Activated CD4-positive, alpha-beta T cell treated with anti-CD3 and anti-CD28 coated beads for 36 hours (primary cell): ENCODE measurements at regions of chr7 and their contacts with region 1.

Region 1: GRCh38 chr7:22238354-22239311 is 118.3 kb downstream of the RAPGEF5 start:
- DNase-seq: no peak
- ATAC-seq: no peak
- H3K4me3 Mint-ChIP-seq: no peak overlapping the region
- H3K27ac Mint-ChIP-seq: no peak overlapping the region
- H3K4me1 Mint-ChIP-seq: no peaks in the 10 kb centered on the region
- H3K27me3 Mint-ChIP-seq: no peaks in the 10 kb centered on the region

Region 2: DNA sequence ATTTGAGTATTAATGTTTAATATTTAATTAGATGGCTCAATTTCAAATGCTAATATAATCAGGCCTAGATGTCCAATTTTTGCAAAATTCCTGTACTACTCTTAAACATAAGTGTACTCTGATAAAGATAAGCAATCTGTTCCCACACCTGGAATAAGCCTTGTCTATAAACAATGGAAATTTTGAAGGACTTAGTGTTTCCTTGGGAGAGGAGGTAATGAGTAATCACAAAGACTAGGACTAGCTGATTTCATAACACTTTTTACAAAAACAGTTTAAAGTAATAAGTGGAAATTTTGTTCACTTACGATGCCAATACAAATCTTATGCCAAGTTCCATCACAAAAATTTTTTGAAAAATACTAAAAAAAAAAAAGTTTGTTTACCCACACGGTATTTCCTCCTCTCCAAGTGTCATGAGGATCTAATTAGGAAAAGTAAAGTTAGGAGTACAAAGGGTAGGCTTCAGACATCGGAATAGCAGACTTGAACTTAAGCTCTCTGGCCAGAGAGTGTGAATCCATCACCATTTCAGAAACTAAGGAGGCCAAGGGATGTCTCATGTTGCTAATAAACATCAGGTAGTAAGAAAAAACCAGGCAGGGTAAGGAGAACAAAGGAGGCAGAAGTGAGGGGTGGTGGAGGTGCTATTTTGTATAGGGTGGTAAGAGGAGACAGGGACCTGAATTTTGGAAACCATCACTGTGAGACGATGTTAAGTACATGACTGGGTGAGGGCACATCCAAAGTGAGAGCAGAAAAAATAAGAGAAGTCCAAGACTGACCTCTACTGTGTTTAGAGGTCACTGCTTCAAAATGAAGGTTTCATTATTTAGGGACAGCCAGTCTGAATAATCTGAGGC is 57.0 kb after region 1 on chr7:
- CTCF ChIA-PET with region 1: no interaction called
- POLR2A ChIA-PET with region 1: no interaction called
- intact Hi-C with region 1: loop called in 1 of 2 experiments (anchors 10 kb)
- DNase-seq: no peak
- ATAC-seq: no peak
- H3K4me3 Mint-ChIP-seq: no peak overlapping the region
- H3K27ac Mint-ChIP-seq: no peak overlapping the region
- H3K4me1 Mint-ChIP-seq: peaks cover 9% of the 10 kb centered on the region
- H3K27me3 Mint-ChIP-seq: peaks cover 4% of the 10 kb centered on the region

Region 3: GRCh38 chr7:23135755-23136154 is 897.1 kb after region 1 on chr7:
- CTCF ChIA-PET with region 1: no interaction called
- POLR2A ChIA-PET with region 1: no interaction called
- intact Hi-C with region 1: no loop called
- DNase-seq: no peak
- ATAC-seq: no peak
- H3K4me3 Mint-ChIP-seq: no peak overlapping the region
- H3K27ac Mint-ChIP-seq: no peak overlapping the region
- H3K4me1 Mint-ChIP-seq: no peaks in the 10 kb centered on the region
- H3K27me3 Mint-ChIP-seq: no peaks in the 10 kb centered on the region